ENCODE measurements at regions of chr11 and their contacts with region 1.

Region 1: GRCh38 chr11:62542750-62543567 is 3.6 kb downstream of the AHNAK start:
- DNase-seq: peak; percentile 66 to 86
- H3K4me3 ChIP-seq: peak overlapping the region; percentile 98 to 100 (median 98)
- H3K27ac ChIP-seq: peak overlapping the region; percentile 96 to 99
- H3K4me1 ChIP-seq: peaks cover 34 to 47% of the 10 kb centered on the region in 2 donors
- H3K27me3 ChIP-seq: no peaks in the 10 kb centered on the region
- CTCF ChIP-seq: peak; percentile 97 to 98 (median 98)
- POLR2A ChIP-seq: no peak

Region 2: DNA sequence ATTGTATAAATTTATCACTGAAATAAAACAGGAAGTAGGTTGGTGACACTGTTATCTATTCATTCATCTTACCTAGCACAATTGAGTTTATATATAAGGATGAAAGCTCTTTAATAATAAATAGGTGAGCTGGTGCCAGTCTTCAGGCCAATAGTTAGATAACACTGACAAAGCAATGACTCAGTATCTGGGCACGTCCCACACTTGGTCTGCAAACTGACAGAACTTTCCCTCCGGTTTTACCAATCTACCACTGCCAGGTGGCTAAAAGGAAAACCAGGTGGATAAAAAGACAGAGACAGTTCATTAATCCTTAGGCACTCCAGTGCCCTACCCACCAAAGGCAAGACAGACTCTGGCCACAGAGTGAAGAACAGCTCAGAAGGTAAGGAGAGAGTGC is 1227.7 kb before region 1 on chr11:
- intact Hi-C with region 1: no loop called
- DNase-seq: no peak
- H3K4me3 ChIP-seq: no peak overlapping the region
- H3K27ac ChIP-seq: no peak overlapping the region
- H3K4me1 ChIP-seq: no peaks in the 10 kb centered on the region
- H3K27me3 ChIP-seq: no peaks in the 10 kb centered on the region
- CTCF ChIP-seq: no peak
- POLR2A ChIP-seq: no peak

Region 3: GRCh38 chr11:62427630-62428233 is 115.2 kb before region 1 on chr11:
- intact Hi-C with region 1: loop called (anchors 10 kb)
- DNase-seq: no peak
- H3K4me3 ChIP-seq: peak overlapping the region in 1 of 3 donors; percentile 15
- H3K27ac ChIP-seq: peak overlapping the region; percentile 40 to 72
- H3K4me1 ChIP-seq: no peaks in the 10 kb centered on the region
- H3K27me3 ChIP-seq: no peaks in the 10 kb centered on the region
- CTCF ChIP-seq: no peak
- POLR2A ChIP-seq: no peak

Region 4: DNA sequence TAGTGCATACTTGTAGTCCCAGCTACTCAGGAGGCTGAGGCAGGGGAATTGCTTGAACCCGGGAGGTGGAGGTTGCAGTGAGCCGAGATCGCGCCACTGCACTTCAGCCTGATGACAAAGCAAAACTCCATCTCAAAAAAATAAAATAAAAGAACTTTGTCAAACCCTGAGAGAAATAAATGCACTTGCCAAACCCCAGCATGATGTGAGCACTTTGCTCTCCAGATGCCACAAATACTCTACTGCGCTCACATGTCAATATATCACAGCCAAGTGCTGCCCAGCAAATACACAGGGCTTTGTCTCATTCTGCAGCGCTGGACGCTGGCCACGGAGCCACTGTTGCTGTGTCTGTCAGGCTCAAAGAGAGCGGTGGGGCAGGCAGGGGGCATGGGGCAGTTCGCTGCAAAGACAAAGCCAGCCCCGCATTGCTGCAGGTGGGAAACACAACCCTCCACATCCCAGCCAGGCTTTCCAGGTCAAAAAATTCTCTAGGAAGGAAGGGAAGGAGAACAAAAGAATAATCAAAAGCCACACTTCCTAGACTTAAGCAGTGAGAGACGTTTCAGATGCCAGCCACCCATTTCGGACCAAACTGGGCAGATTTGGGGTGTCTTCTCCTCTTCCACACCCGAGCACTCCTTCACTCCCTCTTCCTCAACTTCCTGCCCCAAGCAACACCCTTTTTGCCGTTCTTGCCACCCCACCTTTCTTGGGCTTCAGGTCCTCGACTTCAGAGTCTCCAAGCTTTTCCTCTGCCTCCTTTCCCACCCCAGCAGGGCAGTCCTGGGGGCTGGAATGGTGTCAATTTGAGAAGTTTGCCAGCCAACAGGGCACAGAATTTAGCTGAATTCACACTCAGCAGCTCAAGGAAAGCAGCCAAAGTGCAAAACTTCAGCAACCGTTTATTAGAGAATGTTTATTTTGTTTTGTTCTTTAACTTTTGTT is 41.3 kb before region 1 on chr11:
- intact Hi-C with region 1: loop called (anchors 5 kb)
- DNase-seq: peak; percentile 74 to 81
- H3K4me3 ChIP-seq: peak overlapping the region in 1 of 3 donors; percentile 3
- H3K27ac ChIP-seq: peak overlapping the region; percentile 76 to 84
- H3K4me1 ChIP-seq: peaks cover 0 to 15% of the 10 kb centered on the region in 2 donors
- H3K27me3 ChIP-seq: no peaks in the 10 kb centered on the region
- CTCF ChIP-seq: no peak
- POLR2A ChIP-seq: no peak

Measured in breast epithelium (tissue), 4 donors.